ENCODE measurements at regions of chr15 and their contacts with region 1.

Region 1: DNA sequence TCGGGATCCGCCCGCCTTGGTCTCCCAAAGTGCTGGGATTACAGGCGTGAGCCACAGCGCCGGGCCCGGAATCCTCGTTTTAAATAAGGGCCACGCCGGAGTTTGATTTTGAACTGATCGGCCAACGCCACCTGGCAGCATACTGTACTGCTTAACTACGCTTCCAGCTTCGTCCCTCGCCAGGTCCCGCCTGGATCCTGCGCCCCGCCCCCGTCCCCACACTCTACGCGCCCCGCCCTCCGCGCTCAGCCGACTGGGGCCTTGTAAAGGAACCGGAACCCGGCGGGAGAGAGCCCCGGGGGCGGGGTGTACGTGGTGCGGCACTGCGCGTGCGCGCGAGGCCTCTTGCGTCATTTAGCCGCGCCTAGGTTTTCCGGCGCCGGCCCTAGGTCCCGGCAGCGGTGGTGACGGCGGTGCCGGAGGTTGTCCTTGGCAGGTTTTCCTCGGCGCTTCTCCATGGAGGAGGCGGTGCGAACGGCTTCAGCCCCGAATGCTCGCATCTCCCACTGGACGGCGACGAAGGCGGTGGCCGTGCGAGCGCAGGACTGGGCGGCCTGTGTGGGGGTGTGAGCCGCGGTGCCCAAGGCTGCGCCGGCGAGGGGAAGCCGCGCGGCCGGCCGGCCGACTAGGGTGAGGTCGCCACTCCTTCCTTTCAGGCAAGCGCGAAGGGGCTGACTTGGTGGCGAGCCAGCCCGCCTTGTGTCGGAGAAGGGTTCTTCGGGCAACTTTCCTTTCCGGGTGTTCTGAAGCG is at the start of gene NIPA2:
- DNase-seq: peak; percentile 98
- H3K4me3 ChIP-seq: peak within 1 kb of the TSS; percentile 56 to 98 (median 95)
- H3K27ac ChIP-seq: peak within 1 kb of the TSS; percentile 89
- H3K4me1 ChIP-seq: no peaks in the 10 kb centered on the region
- H3K27me3 ChIP-seq: no peaks in the 10 kb centered on the region
- CTCF ChIP-seq: no peak
- total RNA-seq, gene NIPA2: 58.5 to 61.9 TPM

Region 2: DNA sequence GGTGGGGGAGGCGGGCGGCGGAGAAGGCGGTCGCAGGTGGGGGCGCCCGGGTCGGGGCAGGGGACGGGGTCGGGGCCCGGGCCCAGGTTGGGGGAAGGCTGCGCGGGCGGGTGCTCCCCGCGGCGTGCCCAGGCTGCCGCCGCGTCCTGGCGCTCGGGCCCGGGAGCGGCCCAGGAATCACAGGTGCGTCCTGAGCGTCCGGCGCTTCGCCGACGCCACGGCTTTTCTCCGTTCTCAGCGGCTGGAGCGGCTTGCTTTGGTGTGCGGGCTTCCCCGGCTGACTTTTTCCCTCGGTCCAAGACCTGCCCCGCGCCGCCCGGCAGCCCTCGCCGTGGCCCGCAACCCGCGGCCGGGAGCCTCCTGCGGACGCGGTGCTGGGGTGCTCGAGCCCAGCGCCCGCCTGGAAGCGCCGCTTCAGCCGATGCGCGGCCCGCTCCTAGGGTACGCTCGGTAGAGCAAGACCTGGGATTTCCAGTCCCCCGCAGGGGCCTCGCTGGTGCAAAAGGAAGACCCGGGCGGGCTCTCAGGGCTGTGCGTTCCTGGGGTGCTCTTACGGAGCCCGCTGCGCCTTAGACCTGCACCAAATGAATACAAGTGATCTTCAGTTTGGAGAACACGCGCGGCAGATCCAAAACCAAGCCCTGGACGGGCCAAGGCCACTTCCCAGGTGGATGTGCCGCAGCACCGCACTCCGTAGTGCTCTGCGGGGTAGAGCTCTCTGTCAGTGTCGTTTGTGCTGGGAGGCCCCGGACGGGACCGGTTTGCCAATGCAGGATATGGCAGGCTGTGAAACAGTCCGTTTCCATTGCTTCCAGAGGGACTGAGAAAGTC is 51.4 kb before region 1 on chr15:
- CTCF ChIA-PET with region 1: no interaction called
- dilution Hi-C with region 1: no loop called
- in situ Hi-C with region 1: no loop called
- intact Hi-C with region 1: loop called (anchors 1 kb)
- DNase-seq: peak; percentile 45
- H3K4me3 ChIP-seq: peak overlapping the region; percentile 35 to 69 (median 57)
- H3K27ac ChIP-seq: no peak overlapping the region
- H3K4me1 ChIP-seq: no peaks in the 10 kb centered on the region
- H3K27me3 ChIP-seq: no peaks in the 10 kb centered on the region
- CTCF ChIP-seq: no peak

Region 3: GRCh38 chr15:22799902-22800301 is 38.6 kb before region 1 on chr15:
- CTCF ChIA-PET with region 1: no interaction called
- dilution Hi-C with region 1: no loop called
- in situ Hi-C with region 1: no loop called
- intact Hi-C with region 1: no loop called
- DNase-seq: no peak
- H3K4me3 ChIP-seq: no peak overlapping the region
- H3K27ac ChIP-seq: no peak overlapping the region
- H3K4me1 ChIP-seq: no peaks in the 10 kb centered on the region
- H3K27me3 ChIP-seq: no peaks in the 10 kb centered on the region
- CTCF ChIP-seq: no peak

Region 4: GRCh38 chr15:22811640-22812039 is 26.8 kb before region 1 on chr15:
- CTCF ChIA-PET with region 1: no interaction called
- dilution Hi-C with region 1: no loop called
- in situ Hi-C with region 1: no loop called
- intact Hi-C with region 1: loop called (anchors 2 kb)
- DNase-seq: no peak
- H3K4me3 ChIP-seq: no peak overlapping the region
- H3K27ac ChIP-seq: no peak overlapping the region
- H3K4me1 ChIP-seq: no peaks in the 10 kb centered on the region
- H3K27me3 ChIP-seq: no peaks in the 10 kb centered on the region
- CTCF ChIP-seq: peak; percentile 23 to 49